MCF 10A (cell line): ENCODE measurements at regions of chr7 and their contacts with region 1.

Region 1: GRCh38 chr7:102834999-102835398 is 77.8 kb upstream of the LRRC17 start:
- DNase-seq: peak; percentile 63
- H3K4me3 Mint-ChIP-seq: peak overlapping the region; percentile 13
- H3K27ac Mint-ChIP-seq: peak overlapping the region; percentile 18
- H3K4me1 Mint-ChIP-seq: peaks cover 17% of the 10 kb centered on the region
- H3K27me3 Mint-ChIP-seq: no peaks in the 10 kb centered on the region
- CTCF ChIP-seq: no peak

Region 2: GRCh38 chr7:102874166-102874829 is 39.3 kb after region 1 on chr7:
- CTCF ChIA-PET with region 1: interaction called, 3 read pairs
- POLR2A ChIA-PET with region 1: interaction called, 5 read pairs
- intact Hi-C with region 1: loop called (anchors 5 kb)
- DNase-seq: peak; percentile 72
- H3K4me3 Mint-ChIP-seq: no peak overlapping the region
- H3K27ac Mint-ChIP-seq: peak overlapping the region; percentile 96
- H3K4me1 Mint-ChIP-seq: peaks cover 46% of the 10 kb centered on the region
- H3K27me3 Mint-ChIP-seq: no peaks in the 10 kb centered on the region
- CTCF ChIP-seq: no peak

Region 3: GRCh38 chr7:103392018-103392417 is 557.0 kb after region 1 on chr7:
- CTCF ChIA-PET with region 1: no interaction called
- POLR2A ChIA-PET with region 1: no interaction called
- intact Hi-C with region 1: no loop called
- DNase-seq: no peak
- H3K4me3 Mint-ChIP-seq: no peak overlapping the region
- H3K27ac Mint-ChIP-seq: no peak overlapping the region
- H3K4me1 Mint-ChIP-seq: no peaks in the 10 kb centered on the region
- H3K27me3 Mint-ChIP-seq: peaks cover 26% of the 10 kb centered on the region
- CTCF ChIP-seq: no peak